Naive thymus-derived CD4-positive, alpha-beta T cell (primary cell): ENCODE measurements at regions of chr4 and their contacts with region 1.

Region 1: GRCh38 chr4:89836897-89837384 is at the start of gene SNCA:
- DNase-seq: peak in 8 of 9 donors; percentile 1 to 51 (median 18)
- ATAC-seq: peak; percentile 67
- H3K4me3 ChIP-seq: peak within 1 kb of the TSS; percentile 45
- H3K4me3 Mint-ChIP-seq: peak within 1 kb of the TSS; percentile 79 to 88 (median 84)
- H3K27ac ChIP-seq: no peak within 1 kb of the TSS
- H3K27ac Mint-ChIP-seq: peak within 1 kb of the TSS in 1 of 9 donors; percentile 27
- H3K4me1 ChIP-seq: peaks cover 5 to 15% of the 10 kb centered on the region in 2 donors
- H3K4me1 Mint-ChIP-seq: peaks cover 11 to 32% (median 24%) of the 10 kb centered on the region in 7 donors
- H3K27me3 ChIP-seq: peaks cover 3 to 22% of the 10 kb centered on the region in 2 donors
- H3K27me3 Mint-ChIP-seq: peaks cover 51 to 80% (median 72%) of the 10 kb centered on the region in 5 donors
- total RNA-seq, gene SNCA: 0.49 to 3.0 (median 0.57) TPM

Region 2: GRCh38 chr4:88938135-88938534 is 898.8 kb before region 1 on chr4:
- CTCF ChIA-PET with region 1: no interaction called
- POLR2A ChIA-PET with region 1: no interaction called
- intact Hi-C with region 1: no loop called
- DNase-seq: no peak
- ATAC-seq: no peak
- H3K4me3 ChIP-seq: no peak overlapping the region
- H3K4me3 Mint-ChIP-seq: no peak overlapping the region
- H3K27ac ChIP-seq: no peak overlapping the region
- H3K27ac Mint-ChIP-seq: peak overlapping the region in 2 of 9 donors; percentile 15 to 30
- H3K4me1 ChIP-seq: peaks cover 0 to 33% of the 10 kb centered on the region in 2 donors
- H3K4me1 Mint-ChIP-seq: peaks cover 20 to 69% (median 54%) of the 10 kb centered on the region in 7 donors
- H3K27me3 ChIP-seq: no peaks in the 10 kb centered on the region
- H3K27me3 Mint-ChIP-seq: no peaks in the 10 kb centered on the region

Region 3: GRCh38 chr4:89619206-89619962 is 217.6 kb before region 1 on chr4:
- CTCF ChIA-PET with region 1: no interaction called
- POLR2A ChIA-PET with region 1: no interaction called
- intact Hi-C with region 1: loop called in 1 of 2 experiments (anchors 5 kb)
- DNase-seq: peak in 1 of 9 donors; percentile 18
- ATAC-seq: peak; percentile 40
- H3K4me3 ChIP-seq: peak overlapping the region; percentile 16
- H3K4me3 Mint-ChIP-seq: peak overlapping the region in 9 of 10 donors; percentile 26 to 80 (median 62)
- H3K27ac ChIP-seq: no peak overlapping the region
- H3K27ac Mint-ChIP-seq: peak overlapping the region in 8 of 9 donors; percentile 13 to 92 (median 70)
- H3K4me1 ChIP-seq: peaks cover 0 to 14% of the 10 kb centered on the region in 2 donors
- H3K4me1 Mint-ChIP-seq: peaks cover 4 to 46% (median 19%) of the 10 kb centered on the region in 7 donors
- H3K27me3 ChIP-seq: no peaks in the 10 kb centered on the region
- H3K27me3 Mint-ChIP-seq: peaks cover 0 to 3% (median 0%) of the 10 kb centered on the region in 5 donors

Region 4: DNA sequence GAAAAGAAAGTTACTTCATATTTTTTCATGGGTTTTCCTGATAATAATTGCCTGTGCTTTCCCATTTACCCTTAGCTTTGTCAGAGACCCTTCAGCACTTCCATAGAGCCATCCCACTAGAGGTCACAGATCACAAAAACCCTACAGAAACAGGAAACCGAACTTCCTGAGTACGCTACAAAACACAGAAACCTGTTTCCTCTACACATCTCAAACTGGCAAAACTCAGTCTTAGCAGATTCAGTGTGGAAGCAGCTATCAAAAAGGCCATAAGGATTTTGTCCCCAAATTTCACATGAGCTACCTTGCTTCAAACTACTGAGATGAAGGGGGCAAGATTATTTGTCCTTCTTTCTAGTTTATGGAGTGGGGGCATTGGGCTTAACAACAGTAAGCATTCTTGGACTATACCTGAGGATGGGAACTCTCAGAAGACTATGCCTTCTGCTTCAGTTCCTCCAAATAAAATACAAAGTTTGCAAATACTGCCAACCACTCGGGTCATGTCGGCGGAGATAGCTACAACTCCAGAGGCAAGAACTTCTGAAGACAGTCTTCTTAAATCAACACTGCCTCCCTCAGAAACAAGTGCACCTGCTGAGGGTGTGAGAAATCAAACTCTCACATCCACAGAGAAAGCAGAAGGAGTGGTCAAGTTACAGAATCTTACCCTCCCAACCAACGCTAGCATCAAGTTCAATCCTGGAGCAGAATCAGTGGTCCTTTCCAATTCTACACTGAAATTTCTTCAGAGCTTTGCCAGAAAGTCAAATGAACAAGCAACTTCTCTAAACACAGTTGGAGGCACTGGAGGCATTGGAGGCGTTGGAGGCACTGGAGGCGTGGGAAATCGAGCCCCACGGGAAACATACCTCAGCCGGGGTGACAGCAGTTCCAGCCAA is 58.0 kb after region 1 on chr4 and contains the start of gene MMRN1:
- CTCF ChIA-PET with region 1: no interaction called
- POLR2A ChIA-PET with region 1: no interaction called
- intact Hi-C with region 1: loop called (anchors 2 to 5 kb)
- DNase-seq: peak in 6 of 9 donors; percentile 1 to 28 (median 19)
- ATAC-seq: peak; percentile 67
- H3K4me3 ChIP-seq: peak within 1 kb of the TSS; percentile 12
- H3K4me3 Mint-ChIP-seq: peak within 1 kb of the TSS; percentile 61 to 91 (median 73)
- H3K27ac ChIP-seq: peak within 1 kb of the TSS; percentile 44
- H3K27ac Mint-ChIP-seq: peak within 1 kb of the TSS; percentile 44 to 91 (median 75)
- H3K4me1 ChIP-seq: peaks cover 12 to 19% of the 10 kb centered on the region in 2 donors
- H3K4me1 Mint-ChIP-seq: peaks cover 11 to 39% (median 26%) of the 10 kb centered on the region in 7 donors
- H3K27me3 ChIP-seq: no peaks in the 10 kb centered on the region
- H3K27me3 Mint-ChIP-seq: peaks cover 0 to 6% (median 0%) of the 10 kb centered on the region in 5 donors
- total RNA-seq, gene MMRN1: 0.16 to 1.1 (median 0.51) TPM